PC-9 (cell line): ENCODE measurements at regions of chr4 and their contacts with region 1.

Region 1: GRCh38 chr4:121900132-121900983 is 30.1 kb upstream of the BBS7 start:
- DNase-seq: peak; percentile 42 to 43
- H3K4me3 ChIP-seq: no peak overlapping the region
- H3K27ac ChIP-seq: no peak overlapping the region
- H3K4me1 ChIP-seq: no peaks in the 10 kb centered on the region
- H3K27me3 ChIP-seq: no peaks in the 10 kb centered on the region
- CTCF ChIP-seq: peak; percentile 92

Region 2: DNA sequence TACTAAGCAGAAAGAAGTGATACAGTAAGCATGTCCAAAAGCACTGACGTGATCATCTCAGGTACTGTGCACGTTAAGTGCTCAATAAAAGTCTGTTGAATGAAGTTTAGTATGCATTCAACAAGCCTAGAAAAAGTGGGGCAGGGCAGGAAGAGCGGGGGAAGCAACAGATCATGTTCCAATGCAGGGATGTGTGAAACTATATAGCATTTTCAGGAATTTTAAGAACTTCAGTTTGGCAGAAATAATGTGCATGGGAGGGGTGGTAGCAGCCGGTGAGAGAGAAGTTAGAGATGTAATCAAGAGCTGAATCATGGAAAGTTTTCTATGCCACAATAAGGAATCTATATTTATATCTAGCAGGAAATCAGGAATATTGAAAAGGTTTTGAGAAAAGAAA is 57.5 kb before region 1 on chr4:
- CTCF ChIA-PET with region 1: no interaction called
- POLR2A ChIA-PET with region 1: no interaction called
- intact Hi-C with region 1: loop called (anchors 2 kb)
- DNase-seq: no peak
- H3K4me3 ChIP-seq: no peak overlapping the region
- H3K27ac ChIP-seq: no peak overlapping the region
- H3K4me1 ChIP-seq: no peaks in the 10 kb centered on the region
- H3K27me3 ChIP-seq: no peaks in the 10 kb centered on the region
- CTCF ChIP-seq: no peak

Region 3: GRCh38 chr4:121938282-121939092 is 38.1 kb after region 1 on chr4:
- CTCF ChIA-PET with region 1: no interaction called
- POLR2A ChIA-PET with region 1: no interaction called
- intact Hi-C with region 1: no loop called
- DNase-seq: peak; percentile 19 to 38
- H3K4me3 ChIP-seq: no peak overlapping the region
- H3K27ac ChIP-seq: no peak overlapping the region
- H3K4me1 ChIP-seq: no peaks in the 10 kb centered on the region
- H3K27me3 ChIP-seq: no peaks in the 10 kb centered on the region
- CTCF ChIP-seq: no peak

Region 4: DNA sequence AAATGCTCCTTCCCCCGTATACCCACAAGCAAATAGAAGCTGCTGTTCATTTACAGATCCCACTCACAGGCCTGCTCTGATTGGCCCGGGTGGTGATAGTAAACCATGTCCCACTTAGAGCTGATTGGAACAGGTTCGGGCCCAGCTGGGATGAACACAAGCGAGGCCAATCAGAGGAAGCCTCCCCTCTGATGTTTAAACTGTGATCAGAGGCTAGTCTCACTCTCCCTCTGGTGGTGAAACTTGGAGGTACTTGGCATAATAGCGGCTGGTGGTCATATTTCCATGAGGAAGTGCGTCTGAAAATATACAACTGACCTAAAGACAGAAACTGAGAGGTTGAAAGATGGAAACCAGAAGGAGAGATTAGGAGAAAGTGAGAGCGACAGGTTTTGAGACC is 103.0 kb after region 1 on chr4:
- CTCF ChIA-PET with region 1: no interaction called
- POLR2A ChIA-PET with region 1: no interaction called
- intact Hi-C with region 1: loop called (anchors 1 kb)
- DNase-seq: peak in 1 of 2 experiments; percentile 7
- H3K4me3 ChIP-seq: no peak overlapping the region
- H3K27ac ChIP-seq: no peak overlapping the region
- H3K4me1 ChIP-seq: no peaks in the 10 kb centered on the region
- H3K27me3 ChIP-seq: no peaks in the 10 kb centered on the region
- CTCF ChIP-seq: peak; percentile 70

Region 5: GRCh38 chr4:122034619-122035018 is 134.3 kb after region 1 on chr4:
- CTCF ChIA-PET with region 1: no interaction called
- POLR2A ChIA-PET with region 1: no interaction called
- intact Hi-C with region 1: no loop called
- DNase-seq: no peak
- H3K4me3 ChIP-seq: no peak overlapping the region
- H3K27ac ChIP-seq: no peak overlapping the region
- H3K4me1 ChIP-seq: peaks cover 9% of the 10 kb centered on the region
- H3K27me3 ChIP-seq: 0 out of 2 replicates have a peak, but pooled peaks cover 3% of the 10 kb centered on the region
- CTCF ChIP-seq: no peak

Region 6: DNA sequence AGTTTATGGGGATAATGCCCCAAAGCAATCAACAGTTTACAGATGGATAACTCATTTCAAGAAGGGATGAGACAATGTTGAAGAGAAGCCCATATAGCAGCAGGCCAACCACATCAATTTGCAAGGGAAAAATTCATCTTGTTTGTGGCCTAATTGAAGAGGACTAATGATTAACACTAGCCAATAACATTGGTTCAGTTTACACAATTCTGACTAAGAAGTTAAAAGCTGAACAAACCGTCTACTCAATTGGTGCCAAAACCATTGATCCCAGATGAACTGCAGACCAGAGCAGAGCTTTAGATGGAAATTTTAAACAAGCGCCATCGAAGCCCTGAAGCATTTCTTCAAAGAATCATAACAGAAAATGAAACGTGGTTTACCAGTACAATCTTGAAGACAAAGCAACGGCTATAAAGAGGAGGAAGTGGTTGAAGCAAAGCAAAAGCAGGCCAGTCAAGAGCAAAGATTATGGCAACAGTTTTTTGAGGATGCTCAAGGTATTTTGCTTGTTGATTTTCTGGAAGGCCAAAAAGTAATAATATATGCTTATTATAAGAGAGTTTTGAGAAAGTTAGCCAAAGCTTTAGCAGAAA is 231.3 kb after region 1 on chr4:
- CTCF ChIA-PET with region 1: no interaction called
- POLR2A ChIA-PET with region 1: no interaction called
- intact Hi-C with region 1: no loop called
- DNase-seq: no peak
- H3K4me3 ChIP-seq: no peak overlapping the region
- H3K27ac ChIP-seq: no peak overlapping the region
- H3K4me1 ChIP-seq: no peaks in the 10 kb centered on the region
- H3K27me3 ChIP-seq: no peaks in the 10 kb centered on the region
- CTCF ChIP-seq: no peak

Region 7: GRCh38 chr4:122577808-122578781 is 677.7 kb after region 1 on chr4:
- CTCF ChIA-PET with region 1: no interaction called
- POLR2A ChIA-PET with region 1: no interaction called
- intact Hi-C with region 1: loop called (anchors 1 kb)
- DNase-seq: peak in 1 of 2 experiments; percentile 30
- H3K4me3 ChIP-seq: no peak overlapping the region
- H3K27ac ChIP-seq: no peak overlapping the region
- H3K4me1 ChIP-seq: no peaks in the 10 kb centered on the region
- H3K27me3 ChIP-seq: no peaks in the 10 kb centered on the region
- CTCF ChIP-seq: peak; percentile 78

Region 8: GRCh38 chr4:122930862-122931261 is 1030.5 kb after region 1 on chr4:
- CTCF ChIA-PET with region 1: no interaction called
- POLR2A ChIA-PET with region 1: no interaction called
- intact Hi-C with region 1: loop called (anchors 5 kb)
- DNase-seq: no peak
- H3K4me3 ChIP-seq: no peak overlapping the region
- H3K27ac ChIP-seq: no peak overlapping the region
- H3K4me1 ChIP-seq: no peaks in the 10 kb centered on the region
- H3K27me3 ChIP-seq: no peaks in the 10 kb centered on the region
- CTCF ChIP-seq: peak; percentile 85